ENCODE measurements at regions of chr10 and their contacts with region 1.

Region 1: DNA sequence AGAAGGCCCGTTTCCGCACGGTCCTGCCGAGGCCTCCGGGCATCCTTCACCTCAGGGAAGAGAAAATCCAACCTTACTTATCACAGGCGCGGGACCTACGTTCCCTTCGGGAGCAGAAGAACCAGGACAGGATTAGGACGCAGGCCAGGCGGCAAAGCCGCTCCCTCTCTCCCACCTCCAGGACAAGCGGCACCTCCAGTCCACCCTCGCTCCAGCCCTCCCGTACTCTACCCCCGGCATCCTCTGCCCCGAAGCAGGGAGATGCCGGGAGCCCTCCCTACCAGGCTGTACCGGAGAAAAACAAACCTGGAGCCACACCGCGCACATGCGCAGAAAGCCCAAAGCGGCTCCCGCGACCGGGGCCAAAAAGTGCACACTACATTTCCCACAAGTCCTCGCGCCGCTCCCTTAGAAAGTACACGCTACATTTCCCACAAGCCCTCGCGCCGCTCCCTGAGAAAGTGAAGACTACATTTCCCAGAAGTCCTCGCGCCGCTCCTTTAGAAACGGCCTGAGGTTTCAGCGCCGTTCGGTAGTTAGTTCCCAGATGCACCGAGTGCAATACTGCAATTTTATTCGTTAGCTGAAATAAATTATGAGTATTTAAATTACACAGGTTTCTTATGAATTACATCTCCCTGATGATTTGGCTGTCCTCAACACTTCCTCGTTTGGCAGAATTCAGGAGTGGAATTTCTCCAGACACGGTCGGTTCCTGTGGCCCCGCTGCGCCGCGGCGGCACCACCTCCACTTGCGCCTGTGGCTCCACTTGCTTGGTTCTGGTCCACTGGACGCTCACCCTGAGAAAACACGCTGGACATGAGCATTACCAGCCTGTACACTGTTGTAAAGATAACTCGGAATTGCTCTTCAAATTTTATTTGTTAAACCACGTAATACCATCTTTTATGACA is 85.6 kb downstream of the ZNF33B start:
- DNase-seq: peak; percentile 95 to 96
- H3K4me3 ChIP-seq: peak overlapping the region; percentile 76
- H3K27ac ChIP-seq: no peak overlapping the region
- H3K4me1 ChIP-seq: peaks cover 7% of the 10 kb centered on the region
- H3K27me3 ChIP-seq: no peaks in the 10 kb centered on the region
- CTCF ChIP-seq: no peak

Region 2: GRCh38 chr10:42523098-42523497 is 29.7 kb before region 1 on chr10:
- CTCF ChIA-PET with region 1: no interaction called
- POLR2A ChIA-PET with region 1: no interaction called
- intact Hi-C with region 1: no loop called
- DNase-seq: no peak
- H3K4me3 ChIP-seq: no peak overlapping the region
- H3K27ac ChIP-seq: no peak overlapping the region
- H3K4me1 ChIP-seq: no peaks in the 10 kb centered on the region
- H3K27me3 ChIP-seq: no peaks in the 10 kb centered on the region
- CTCF ChIP-seq: no peak

Region 3: DNA sequence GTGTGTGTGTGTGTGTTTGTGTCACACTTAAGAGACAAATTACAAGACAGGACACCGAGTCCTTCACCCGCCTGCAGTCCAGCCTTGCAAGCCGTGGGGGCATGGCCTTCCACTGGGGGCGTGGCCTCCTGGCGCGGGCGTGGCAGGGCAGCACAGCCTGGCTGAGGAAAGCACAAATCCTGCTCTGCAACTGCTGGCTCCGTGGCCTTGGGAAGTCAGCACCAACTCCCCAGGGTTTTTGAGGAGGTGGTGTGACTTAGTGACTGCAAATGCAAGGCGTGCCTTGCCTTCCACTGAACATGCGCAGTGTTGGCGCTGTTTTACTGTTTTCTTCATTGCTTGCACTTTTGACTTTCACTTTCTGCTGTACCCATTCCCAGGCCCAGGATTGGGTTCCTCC is 216.9 kb after region 1 on chr10:
- CTCF ChIA-PET with region 1: no interaction called
- POLR2A ChIA-PET with region 1: no interaction called
- intact Hi-C with region 1: no loop called
- DNase-seq: peak in 1 of 2 experiments; percentile 74
- H3K4me3 ChIP-seq: peak overlapping the region; percentile 34; the same call in 1 of the 2 replicates
- H3K27ac ChIP-seq: no peak overlapping the region
- H3K4me1 ChIP-seq: no peaks in the 10 kb centered on the region; the same call in 1 of the 2 replicates
- H3K27me3 ChIP-seq: peaks cover 40% of the 10 kb centered on the region
- CTCF ChIP-seq: no peak

Region 4: DNA sequence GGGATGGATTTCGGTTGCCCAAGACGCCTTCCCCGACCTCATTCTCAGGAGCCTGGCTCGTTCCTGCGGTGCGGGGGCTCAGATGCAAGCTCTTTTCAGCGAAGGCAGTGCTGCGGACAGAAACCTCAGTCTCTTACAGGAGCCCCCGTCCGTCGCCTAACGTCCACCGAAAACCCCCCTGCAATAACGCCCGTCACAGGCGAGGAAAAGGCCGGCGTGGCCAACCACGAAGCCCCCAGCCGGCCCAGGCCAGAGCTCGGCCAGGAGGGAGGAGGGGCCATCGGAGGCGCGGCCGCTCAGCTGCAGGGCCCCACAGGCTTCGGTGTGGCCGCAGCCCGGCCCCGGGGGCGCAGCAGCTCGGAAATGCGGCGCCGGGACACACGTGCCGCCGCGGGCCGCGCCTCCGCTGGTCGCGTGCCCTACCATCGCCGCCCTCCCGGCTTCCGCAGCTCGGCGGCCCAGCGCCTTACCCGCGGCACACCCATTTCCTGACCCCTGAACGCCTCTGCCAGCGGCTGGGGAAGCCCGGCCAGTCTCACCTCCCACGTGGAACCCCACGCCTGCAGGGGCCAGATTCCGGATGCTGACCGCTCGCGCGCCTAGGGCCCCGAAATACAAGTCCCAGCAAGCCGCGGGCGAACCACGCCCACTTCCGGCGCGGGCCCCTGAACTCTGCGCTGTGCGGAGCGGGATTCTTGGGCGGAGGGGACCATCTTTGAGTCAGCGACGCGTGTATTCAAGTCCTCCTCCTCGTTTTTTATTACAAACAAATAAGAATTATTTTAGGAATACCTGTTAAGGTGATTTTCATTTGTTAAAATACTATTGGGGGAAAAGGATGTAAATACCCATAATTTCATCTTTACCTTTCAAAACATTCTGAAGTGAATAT is 1021.5 kb after region 1 on chr10 and contains the start of gene ZNF239:
- CTCF ChIA-PET with region 1: no interaction called
- POLR2A ChIA-PET with region 1: no interaction called
- intact Hi-C with region 1: loop called (anchors 10 kb)
- DNase-seq: peak; percentile 67 to 80
- H3K4me3 ChIP-seq: peak within 1 kb of the TSS; percentile 75
- H3K27ac ChIP-seq: no peak within 1 kb of the TSS
- H3K4me1 ChIP-seq: peaks cover 12% of the 10 kb centered on the region; the same call in 1 of the 2 replicates
- H3K27me3 ChIP-seq: no peaks in the 10 kb centered on the region
- CTCF ChIP-seq: no peak
- total RNA-seq, gene ZNF239: 3.3 and 3.7 TPM in 2 replicates

Measured in PC-9 (cell line).